Activated CD4-positive, alpha-beta memory T cell treated with anti-CD3 and anti-CD28 coated beads for 36 hours (primary cell): ENCODE measurements at regions of chr3 and their contacts with region 1.

Region 1: GRCh38 chr3:50321336-50322114 is 1.0 kb downstream of the HYAL2 start:
- DNase-seq: peak; percentile 88
- H3K4me3 Mint-ChIP-seq: peak overlapping the region; percentile 77
- H3K27ac Mint-ChIP-seq: peak overlapping the region; percentile 86
- H3K4me1 Mint-ChIP-seq: peaks cover 30% of the 10 kb centered on the region
- H3K27me3 Mint-ChIP-seq: no peaks in the 10 kb centered on the region

Region 2: GRCh38 chr3:50304601-50305000 is 16.9 kb before region 1 on chr3:
- CTCF ChIA-PET with region 1: interaction called, 30 read pairs
- POLR2A ChIA-PET with region 1: interaction called, 5 read pairs
- intact Hi-C with region 1: loop called (anchors 1 kb)
- DNase-seq: peak; percentile 37
- H3K4me3 Mint-ChIP-seq: no peak overlapping the region
- H3K27ac Mint-ChIP-seq: no peak overlapping the region
- H3K4me1 Mint-ChIP-seq: peaks cover 19% of the 10 kb centered on the region
- H3K27me3 Mint-ChIP-seq: no peaks in the 10 kb centered on the region

Region 3: DNA sequence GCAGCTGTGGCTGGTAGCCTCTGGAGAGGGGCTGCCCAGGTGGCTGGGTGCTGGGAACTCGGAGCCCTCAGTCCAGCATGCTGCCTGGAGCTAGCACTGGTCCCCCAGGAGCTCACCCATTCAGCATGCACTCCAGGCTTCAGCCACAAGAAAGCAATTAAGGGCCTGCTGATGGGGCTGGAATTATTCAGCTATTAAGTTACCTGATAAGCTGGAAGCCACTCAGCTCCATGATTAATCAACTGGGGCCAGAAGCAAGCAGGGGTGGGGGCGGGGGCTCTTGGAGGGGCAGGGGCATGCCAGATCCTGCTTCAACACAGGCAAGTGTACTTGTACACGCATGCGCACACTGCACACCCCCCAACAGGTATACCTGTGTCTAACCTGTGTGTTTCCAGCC is 59.9 kb after region 1 on chr3:
- CTCF ChIA-PET with region 1: no interaction called
- POLR2A ChIA-PET with region 1: no interaction called
- intact Hi-C with region 1: no loop called
- DNase-seq: no peak
- H3K4me3 Mint-ChIP-seq: no peak overlapping the region
- H3K27ac Mint-ChIP-seq: no peak overlapping the region
- H3K4me1 Mint-ChIP-seq: no peaks in the 10 kb centered on the region
- H3K27me3 Mint-ChIP-seq: no peaks in the 10 kb centered on the region